ENCODE measurements at regions of chr1 and their contacts with region 1.

Region 1: DNA sequence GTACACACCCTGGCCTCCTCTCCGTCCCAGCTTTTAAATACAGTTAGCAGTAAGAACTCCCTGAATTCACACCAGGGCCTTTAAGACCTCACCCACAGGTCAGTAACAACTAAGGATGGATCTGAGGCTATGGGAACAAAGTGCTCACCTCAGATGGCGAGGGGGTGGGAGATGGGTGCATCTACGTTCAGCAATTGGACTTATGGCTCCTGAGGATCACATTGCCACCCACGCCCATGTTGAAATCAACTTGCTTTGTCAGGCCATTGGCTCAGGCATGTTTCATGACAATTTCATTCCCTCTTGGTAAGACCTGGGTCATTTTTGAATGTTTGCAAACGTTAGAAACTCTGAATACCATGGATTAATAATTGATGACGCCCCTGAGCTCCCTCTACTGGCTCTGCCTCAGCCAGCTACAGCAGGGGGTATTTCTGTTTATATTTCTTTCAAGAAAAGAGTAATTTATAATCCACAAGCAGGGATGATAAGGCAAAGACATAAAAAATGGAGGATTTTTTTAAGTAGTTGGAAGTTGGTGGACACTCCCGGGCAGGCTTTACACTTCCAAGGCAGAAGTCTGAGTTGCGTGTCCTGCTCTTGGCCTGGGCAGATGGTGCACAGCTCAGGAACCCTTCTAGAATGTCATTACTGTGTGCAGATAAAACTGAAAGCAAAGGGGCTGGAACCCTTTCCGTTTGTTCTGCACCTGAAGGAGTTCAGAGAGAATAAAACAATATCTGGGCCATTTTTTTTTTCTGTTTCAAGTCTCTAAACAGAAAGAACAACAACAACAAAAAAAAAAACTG is 13.7 kb upstream of the LBR start:
- DNase-seq: no peak
- ATAC-seq: no peak
- H3K4me3 ChIP-seq: peak overlapping the region in 1 of 5 experiments; percentile 6
- H3K4me3 Mint-ChIP-seq: peak overlapping the region; percentile 5
- H3K27ac ChIP-seq: peak overlapping the region in 1 of 2 donors; percentile 48
- H3K27ac Mint-ChIP-seq: peak overlapping the region; percentile 38
- H3K4me1 ChIP-seq: peaks cover 42 to 59% of the 10 kb centered on the region in 2 donors
- H3K4me1 Mint-ChIP-seq: peaks cover 56% of the 10 kb centered on the region
- H3K27me3 ChIP-seq: no peaks in the 10 kb centered on the region
- H3K27me3 Mint-ChIP-seq: no peaks in the 10 kb centered on the region
- CTCF ChIP-seq: peak; percentile 22

Region 2: DNA sequence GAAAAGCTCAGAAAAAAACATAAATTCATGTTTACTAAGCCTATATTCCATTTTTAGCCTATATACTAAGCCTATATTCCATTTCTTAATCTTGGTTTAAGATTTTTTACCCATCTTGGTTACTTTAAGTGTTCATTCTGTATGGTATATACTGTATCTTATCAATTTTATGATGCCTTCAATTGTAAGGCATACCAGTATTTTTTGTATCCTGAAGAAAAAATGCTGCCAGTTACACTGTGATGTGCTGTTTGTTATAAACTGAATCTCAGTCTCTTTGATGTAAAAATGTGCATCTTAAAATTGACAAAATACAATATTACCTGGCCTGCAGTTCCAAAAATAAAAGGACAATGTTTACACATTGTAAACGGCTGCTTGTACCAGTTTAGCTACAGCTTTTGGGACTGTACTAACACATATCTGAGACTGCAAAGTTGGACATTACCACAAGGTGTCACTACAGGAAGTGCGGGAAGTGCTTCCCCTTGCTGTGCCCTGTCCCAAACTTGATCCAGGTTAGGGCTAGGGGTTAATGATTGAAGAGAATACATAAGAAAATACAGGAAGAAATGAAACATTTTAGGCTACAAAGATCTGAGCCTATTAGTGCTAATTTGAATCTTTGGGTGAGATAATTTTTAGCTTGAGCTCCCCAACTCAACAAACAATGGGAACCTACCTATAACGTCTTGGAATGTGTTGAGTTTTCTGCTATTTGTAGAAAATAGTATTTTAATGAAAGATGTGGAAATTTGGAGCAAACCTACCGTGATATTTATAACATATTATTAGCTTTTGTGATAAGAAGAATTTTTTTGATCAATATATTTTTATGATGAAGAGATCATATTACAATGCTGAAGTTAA is 122.6 kb before region 1 on chr1:
- CTCF ChIA-PET with region 1: interaction called, 14 read pairs
- POLR2A ChIA-PET with region 1: no interaction called
- intact Hi-C with region 1: no loop called
- DNase-seq: peak; percentile 46
- ATAC-seq: peak; percentile 33
- H3K4me3 ChIP-seq: no peak overlapping the region
- H3K4me3 Mint-ChIP-seq: no peak overlapping the region
- H3K27ac ChIP-seq: no peak overlapping the region
- H3K27ac Mint-ChIP-seq: no peak overlapping the region
- H3K4me1 ChIP-seq: no peaks in the 10 kb centered on the region
- H3K4me1 Mint-ChIP-seq: no peaks in the 10 kb centered on the region
- H3K27me3 ChIP-seq: peaks cover 0 to 5% (median 0%) of the 10 kb centered on the region in 4 experiments
- H3K27me3 Mint-ChIP-seq: peaks cover 7% of the 10 kb centered on the region
- CTCF ChIP-seq: peak; percentile 79

Region 3: GRCh38 chr1:225467193-225468020 is 25.9 kb after region 1 on chr1:
- CTCF ChIA-PET with region 1: interaction called, 25 read pairs
- POLR2A ChIA-PET with region 1: interaction called, 34 read pairs
- intact Hi-C with region 1: loop called (anchors 1 kb)
- DNase-seq: peak; percentile 92
- ATAC-seq: peak; percentile 88
- H3K4me3 ChIP-seq: peak overlapping the region; percentile 68 to 83 (median 73)
- H3K4me3 Mint-ChIP-seq: peak overlapping the region; percentile 91
- H3K27ac ChIP-seq: peak overlapping the region; percentile 82 to 97
- H3K27ac Mint-ChIP-seq: peak overlapping the region; percentile 97
- H3K4me1 ChIP-seq: peaks cover 15 to 34% of the 10 kb centered on the region in 2 donors
- H3K4me1 Mint-ChIP-seq: peaks cover 37% of the 10 kb centered on the region
- H3K27me3 ChIP-seq: no peaks in the 10 kb centered on the region
- H3K27me3 Mint-ChIP-seq: no peaks in the 10 kb centered on the region
- CTCF ChIP-seq: no peak